K562 (cell line): ENCODE measurements at regions of chrX and their contacts with region 1.

Region 1: DNA sequence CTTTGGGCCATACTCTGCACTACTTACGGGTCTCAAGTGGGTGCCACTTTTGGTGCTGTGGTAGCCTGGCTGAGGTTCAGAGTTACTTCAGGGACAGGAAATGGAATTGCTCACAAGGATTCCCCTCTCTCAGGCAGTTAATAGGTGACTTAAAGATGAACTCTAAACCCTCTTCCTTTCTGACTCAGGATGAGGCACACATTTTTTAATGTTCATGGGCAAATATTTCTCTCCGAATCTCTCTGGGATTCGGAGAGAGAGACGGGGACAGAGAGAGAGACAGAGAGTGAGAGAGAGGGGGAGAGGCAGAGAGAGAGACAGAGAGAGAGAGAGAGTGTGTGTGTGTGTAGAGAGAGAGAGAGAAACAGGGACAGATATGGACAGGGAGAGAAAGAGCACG is 79.8 kb downstream of the NYX start:
- DNase-seq: no peak
- ATAC-seq: no peak
- H3K4me3 ChIP-seq: no peak overlapping the region
- H3K27ac ChIP-seq: no peak overlapping the region
- H3K4me1 ChIP-seq: no peaks in the 10 kb centered on the region
- H3K27me3 ChIP-seq: no peaks in the 10 kb centered on the region
- CTCF ChIP-seq: no peak
- EP300 ChIP-seq: no peak
- POLR2A ChIP-seq: no peak
- RAD21 ChIP-seq: no peak

Region 2: GRCh38 chrX:41381685-41382084 is 145.2 kb before region 1 on chrX:
- CTCF ChIA-PET with region 1: no interaction called
- POLR2A ChIA-PET with region 1: no interaction called
- in situ Hi-C with region 1: no loop called
- intact Hi-C with region 1: no loop called
- DNase-seq: peak in 3 of 4 experiments; percentile 15 to 52 (median 18)
- ATAC-seq: no peak; the same call in 2 of the 3 replicates
- H3K4me3 ChIP-seq: no peak overlapping the region
- H3K27ac ChIP-seq: no peak overlapping the region
- H3K4me1 ChIP-seq: peaks cover 2 to 19% of the 10 kb centered on the region in 2 experiments; a peak in 4 of 5 replicates
- H3K27me3 ChIP-seq: no peaks in the 10 kb centered on the region
- CTCF ChIP-seq: no peak
- EP300 ChIP-seq: peak; percentile 19; the same call in 1 of the 2 replicates
- POLR2A ChIP-seq: no peak
- RAD21 ChIP-seq: no peak

Region 3: DNA sequence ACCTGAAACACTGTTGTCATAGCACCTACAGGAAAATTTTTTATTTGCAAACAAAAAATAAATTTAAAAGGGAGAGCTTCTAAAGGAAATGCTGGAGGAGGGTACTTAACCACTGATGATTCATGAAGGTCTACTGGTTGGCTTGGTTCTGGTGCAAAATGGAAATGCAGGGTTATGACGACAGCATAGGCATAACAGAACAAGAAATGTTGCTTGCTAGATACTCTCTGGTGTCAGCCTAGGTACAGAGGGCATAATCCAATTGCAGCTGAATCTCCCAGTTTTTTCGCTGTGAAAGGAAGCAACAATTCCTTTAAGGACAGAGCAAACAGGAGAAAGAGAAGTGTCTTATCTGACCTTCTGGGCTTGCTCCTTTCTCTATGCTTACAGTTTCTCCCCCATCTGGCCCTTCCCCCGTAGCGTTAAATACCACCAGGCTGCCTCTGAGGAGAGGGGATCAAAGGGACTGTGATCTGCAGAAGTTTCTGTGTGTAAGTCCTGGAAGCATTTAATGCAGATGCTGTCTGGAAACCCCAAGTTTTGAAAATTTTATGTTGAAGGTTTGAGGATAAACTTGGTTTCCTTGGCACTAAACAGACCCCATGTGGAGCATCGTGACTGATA is 420.2 kb after region 1 on chrX:
- CTCF ChIA-PET with region 1: no interaction called
- POLR2A ChIA-PET with region 1: no interaction called
- in situ Hi-C with region 1: loop called (anchors 25 kb)
- intact Hi-C with region 1: no loop called
- DNase-seq: no peak
- ATAC-seq: no peak
- H3K4me3 ChIP-seq: no peak overlapping the region
- H3K27ac ChIP-seq: no peak overlapping the region
- H3K4me1 ChIP-seq: no peaks in the 10 kb centered on the region
- H3K27me3 ChIP-seq: no peaks in the 10 kb centered on the region
- CTCF ChIP-seq: no peak
- EP300 ChIP-seq: no peak
- POLR2A ChIP-seq: no peak
- RAD21 ChIP-seq: no peak